ENCODE measurements at regions of chr10 and their contacts with region 1.

Region 1: DNA sequence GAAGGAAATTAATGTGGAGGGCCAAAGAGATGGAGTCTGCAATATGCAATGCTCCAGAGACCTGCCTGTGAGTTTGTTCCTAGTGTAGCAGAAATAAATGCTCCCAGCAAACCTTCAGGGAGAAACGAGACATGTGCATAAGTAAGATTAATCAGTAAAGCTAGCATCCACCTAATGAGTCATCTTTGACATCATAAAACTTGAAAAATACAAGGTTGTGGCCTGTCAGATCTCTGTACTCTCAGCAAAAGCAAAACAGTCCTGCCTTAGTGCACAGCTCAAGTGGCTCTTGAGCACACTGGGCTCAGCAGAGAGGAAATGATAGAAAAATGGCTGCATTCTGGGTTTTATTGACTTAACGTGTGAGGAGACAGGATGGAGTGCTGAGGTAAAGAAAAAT is 32.5 kb upstream of the ERCC6 start:
- DNase-seq: no peak

Region 2: DNA sequence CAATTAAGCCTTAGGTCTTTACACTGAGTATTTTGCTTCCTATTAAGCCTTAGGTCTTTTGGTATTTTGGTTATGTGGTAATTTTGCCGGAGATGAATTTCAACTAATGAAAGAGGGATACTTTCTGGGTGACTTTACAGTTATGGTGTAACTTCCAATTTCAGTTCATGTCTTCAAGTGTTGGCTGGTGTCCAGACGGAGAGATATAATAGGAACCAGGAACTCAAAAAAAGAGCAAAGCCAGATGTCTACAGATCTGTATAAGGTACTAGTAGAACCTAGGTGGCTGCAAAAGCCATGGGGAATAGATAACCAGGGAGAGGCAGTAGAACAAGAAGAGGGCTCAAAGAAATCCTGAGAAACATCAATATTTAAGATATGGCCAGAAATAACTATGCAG is 44.8 kb before region 1 on chr10:
- intact Hi-C with region 1: no loop called
- DNase-seq: no peak

Region 3: GRCh38 chr10:49538381-49539319 is 32.7 kb before region 1 on chr10 and contains the start of gene ERCC6:
- intact Hi-C with region 1: no loop called
- DNase-seq: peak; percentile 100
- total RNA-seq, gene ERCC6: 17.0 to 17.3 TPM

Region 4: GRCh38 chr10:49679480-49679893 is 108.1 kb after region 1 on chr10 and contains the start of gene C10orf53:
- intact Hi-C with region 1: no loop called
- DNase-seq: no peak
- total RNA-seq, gene C10orf53: not detected

Region 5: GRCh38 chr10:49700997-49701396 is 129.6 kb after region 1 on chr10:
- intact Hi-C with region 1: loop called in 1 of 2 experiments (anchors 10 kb)
- DNase-seq: no peak

Region 6: GRCh38 chr10:50044941-50045664 is 473.7 kb after region 1 on chr10:
- intact Hi-C with region 1: no loop called
- DNase-seq: no peak